ENCODE measurements at regions of chr14 and their contacts with region 1.

Region 1: GRCh38 chr14:74945823-74946682 is 9.3 kb downstream of the PGF start:
- DNase-seq: peak; percentile 78 to 85
- ATAC-seq: peak; percentile 82 to 91 (median 86)
- H3K4me3 ChIP-seq: no peak overlapping the region
- H3K27ac ChIP-seq: no peak overlapping the region
- H3K4me1 ChIP-seq: peaks cover 15% of the 10 kb centered on the region
- H3K27me3 ChIP-seq: no peaks in the 10 kb centered on the region
- CTCF ChIP-seq: peak; percentile 89

Region 2: DNA sequence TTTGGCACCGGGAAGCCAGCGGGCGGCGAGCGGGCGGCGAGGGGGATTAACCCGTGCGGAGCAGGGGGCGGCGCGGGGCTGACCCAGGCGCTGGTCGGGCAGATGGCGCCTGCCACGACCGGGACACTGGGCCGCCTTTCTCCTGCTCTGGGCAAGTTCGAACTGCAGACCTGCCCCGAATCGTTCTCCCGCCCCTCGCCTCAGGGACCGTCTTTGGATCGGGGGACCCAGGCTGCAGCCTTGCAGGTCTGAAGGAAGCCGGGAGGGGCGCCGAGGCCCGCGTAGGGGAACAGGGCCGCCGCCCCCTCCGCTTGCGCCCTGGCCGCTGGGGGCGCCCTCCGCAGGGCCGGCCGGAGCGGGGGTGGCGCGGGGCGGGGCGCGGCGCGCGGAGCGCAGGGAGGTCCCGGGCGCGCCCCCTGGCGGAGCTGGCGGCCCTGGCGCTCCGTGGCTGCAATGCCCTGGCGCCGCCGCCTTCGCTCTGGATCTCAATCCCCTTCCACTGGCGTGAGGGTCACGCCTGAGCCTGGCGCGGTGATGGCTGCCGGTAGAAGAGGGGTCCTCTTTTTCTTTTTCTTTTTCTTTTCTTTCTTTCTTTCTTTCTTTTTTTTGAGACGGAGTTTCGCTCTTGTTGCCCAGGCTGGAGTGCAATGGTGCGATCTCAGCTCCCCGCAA is 333.6 kb before region 1 on chr14:
- intact Hi-C with region 1: no loop called
- DNase-seq: peak; percentile 88 to 92
- ATAC-seq: peak; percentile 83 to 93 (median 88)
- H3K4me3 ChIP-seq: peak overlapping the region; percentile 84
- H3K27ac ChIP-seq: no peak overlapping the region
- H3K4me1 ChIP-seq: peaks cover 21% of the 10 kb centered on the region
- H3K27me3 ChIP-seq: peaks cover 0 to 13% (median 7%) of the 10 kb centered on the region in 3 donors
- CTCF ChIP-seq: peak; percentile 91

Region 3: GRCh38 chr14:74804219-74804826 is 141.7 kb before region 1 on chr14:
- intact Hi-C with region 1: no loop called
- DNase-seq: no peak
- ATAC-seq: peak in 2 of 4 donors; percentile 38 to 79
- H3K4me3 ChIP-seq: no peak overlapping the region
- H3K27ac ChIP-seq: no peak overlapping the region
- H3K4me1 ChIP-seq: no peaks in the 10 kb centered on the region
- H3K27me3 ChIP-seq: no peaks in the 10 kb centered on the region
- CTCF ChIP-seq: peak; percentile 59

Region 4: GRCh38 chr14:75069811-75070782 is 124.0 kb after region 1 on chr14:
- intact Hi-C with region 1: loop called in 1 of 2 experiments (anchors 5 kb)
- DNase-seq: peak; percentile 71 to 78
- ATAC-seq: peak; percentile 68 to 79 (median 74)
- H3K4me3 ChIP-seq: peak overlapping the region; percentile 74
- H3K27ac ChIP-seq: peak overlapping the region; percentile 93
- H3K4me1 ChIP-seq: peaks cover 37% of the 10 kb centered on the region
- H3K27me3 ChIP-seq: no peaks in the 10 kb centered on the region
- CTCF ChIP-seq: no peak